Ovary (tissue), 10 donors: ENCODE measurements at regions of chr1 and their contacts with region 1.

Region 1: DNA sequence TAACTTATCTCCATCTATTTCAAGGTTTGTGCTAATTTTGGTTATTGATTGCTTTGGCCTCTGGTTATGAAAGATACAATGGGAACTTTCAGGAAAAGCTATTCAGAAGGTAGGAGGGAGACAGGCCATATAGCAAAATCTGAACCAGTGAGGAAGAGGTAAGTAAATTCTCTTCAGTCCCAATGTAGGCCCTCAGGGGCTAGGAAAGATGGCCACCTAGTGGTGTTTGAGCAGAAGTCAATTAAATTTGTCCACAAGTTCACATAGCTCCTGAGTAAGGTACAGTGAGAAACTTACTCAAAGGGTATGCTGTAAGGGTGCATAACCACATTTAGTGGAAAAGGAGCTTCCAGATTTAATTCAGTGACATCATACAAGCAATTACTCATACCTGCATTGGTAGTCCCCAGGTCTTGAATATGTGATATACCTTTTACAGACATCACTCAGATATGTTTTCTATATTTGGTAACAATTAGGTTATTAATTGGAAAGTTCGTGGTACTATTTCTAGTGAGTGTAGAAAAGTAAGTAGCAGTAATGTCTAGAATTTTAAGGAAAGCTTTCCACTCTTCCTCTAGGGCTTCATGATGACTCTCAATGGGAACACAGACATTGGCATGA is 21.4 kb upstream of the FMO1 start:
- DNase-seq: peak in 4 of 5 donors; percentile 28 to 65 (median 35)
- H3K4me3 ChIP-seq: no peak overlapping the region
- H3K27ac ChIP-seq: no peak overlapping the region
- H3K4me1 ChIP-seq: peaks cover 1% of the 10 kb centered on the region
- H3K27me3 ChIP-seq: no peaks in the 10 kb centered on the region
- CTCF ChIP-seq: peak; percentile 73 to 90 (median 82)
- EP300 ChIP-seq: no peak
- POLR2A ChIP-seq: no peak

Region 2: DNA sequence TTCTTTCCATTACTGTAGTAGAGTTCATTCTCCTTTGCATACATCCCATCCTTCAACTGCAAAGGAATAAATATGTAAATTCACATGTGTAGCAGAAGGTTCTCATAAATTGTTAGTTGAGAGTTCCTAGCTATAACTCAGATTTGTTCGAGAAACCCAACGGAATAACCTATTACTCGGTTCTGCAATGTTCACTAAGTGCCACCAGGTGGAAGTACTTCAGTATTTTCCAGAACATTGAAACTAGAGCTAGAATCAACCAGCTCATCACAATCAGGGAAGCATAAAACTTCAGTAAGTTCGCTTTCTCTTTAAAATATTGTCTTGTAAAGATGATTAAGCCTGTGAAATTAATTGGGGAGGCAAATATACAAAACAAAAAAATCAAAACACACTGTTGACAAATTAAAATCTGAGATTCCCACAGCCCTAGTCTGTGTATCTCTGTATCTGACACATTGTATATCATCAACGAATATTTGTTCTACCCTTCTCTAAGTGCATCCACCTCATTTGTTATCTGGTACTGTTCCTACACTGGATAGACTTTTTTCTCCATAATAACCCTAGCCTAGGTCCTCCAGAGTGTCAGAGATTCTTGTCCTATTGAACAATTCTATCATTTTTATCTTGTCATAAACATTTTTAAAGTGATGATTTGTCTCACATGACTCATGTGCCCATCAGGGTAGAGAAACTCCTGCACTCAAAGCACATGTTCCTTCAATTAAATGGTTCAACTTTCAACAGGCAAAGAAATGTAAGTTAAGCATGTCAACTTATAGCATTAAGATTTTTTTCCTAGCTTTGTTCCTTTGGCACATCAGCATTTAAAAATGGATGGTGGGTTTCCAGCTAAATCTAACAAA is 259.6 kb before region 1 on chr1:
- intact Hi-C with region 1: loop called in 1 of 4 experiments (anchors 10 kb)
- DNase-seq: peak in 1 of 5 donors; percentile 19
- H3K4me3 ChIP-seq: no peak overlapping the region
- H3K27ac ChIP-seq: no peak overlapping the region
- H3K4me1 ChIP-seq: no peaks in the 10 kb centered on the region
- H3K27me3 ChIP-seq: no peaks in the 10 kb centered on the region
- CTCF ChIP-seq: peak; percentile 23 to 65 (median 49)
- EP300 ChIP-seq: no peak
- POLR2A ChIP-seq: no peak

Region 3: GRCh38 chr1:171277534-171277933 is 50.7 kb after region 1 on chr1:
- intact Hi-C with region 1: no loop called
- DNase-seq: no peak
- H3K4me3 ChIP-seq: no peak overlapping the region
- H3K27ac ChIP-seq: no peak overlapping the region
- H3K4me1 ChIP-seq: no peaks in the 10 kb centered on the region
- H3K27me3 ChIP-seq: no peaks in the 10 kb centered on the region
- CTCF ChIP-seq: no peak
- EP300 ChIP-seq: no peak
- POLR2A ChIP-seq: no peak